Common myeloid progenitor, CD34-positive (primary cell): ENCODE measurements at regions of chr12 and their contacts with region 1.

Region 1: DNA sequence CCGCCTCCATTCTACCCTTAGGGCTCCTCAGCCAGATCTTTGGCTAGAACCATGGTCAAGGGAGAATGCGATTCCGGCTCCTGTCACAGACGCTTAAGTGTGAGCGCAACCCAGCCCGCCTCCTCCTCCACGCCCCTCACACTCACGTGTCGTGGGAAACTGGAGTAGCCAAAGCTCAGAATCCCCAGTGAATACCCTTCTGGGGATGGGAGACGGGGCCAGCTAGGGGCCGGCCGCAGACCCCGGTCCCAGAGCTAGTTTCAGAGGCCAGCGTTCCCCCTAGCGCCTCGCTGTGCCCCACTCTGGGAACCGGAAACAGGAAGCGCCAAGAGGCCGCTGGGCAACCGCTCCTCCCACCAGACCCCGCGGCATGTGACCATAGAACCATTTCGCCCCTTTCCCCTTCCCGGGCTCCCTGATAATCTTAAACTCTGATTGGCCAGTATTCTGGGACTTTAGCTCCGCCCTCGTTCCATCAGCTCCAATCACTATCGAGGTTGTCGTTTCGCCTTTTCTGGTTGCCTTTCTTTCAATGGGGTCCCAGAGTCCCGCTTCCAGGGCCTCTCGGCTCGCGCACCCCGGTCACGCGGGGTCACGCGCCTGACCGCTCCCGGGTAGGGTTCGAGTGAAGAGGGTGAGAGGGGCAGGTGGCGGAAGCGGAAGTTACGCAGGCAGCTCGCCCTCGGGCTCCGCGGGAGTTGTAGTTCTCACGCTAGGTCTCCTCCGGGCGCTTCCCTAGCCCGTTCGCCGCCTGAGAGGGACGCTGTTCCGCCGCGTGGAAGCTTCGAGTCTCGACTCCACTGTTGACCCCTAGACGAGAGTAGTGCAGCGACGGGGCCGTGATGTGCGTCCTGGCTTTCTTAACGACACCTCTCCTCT is at the start of gene M6PR:
- DNase-seq: peak; percentile 95 to 96 (median 96)
- H3K4me3 ChIP-seq: peak within 1 kb of the TSS; percentile 66 to 98 (median 94)
- H3K27ac ChIP-seq: peak within 1 kb of the TSS; percentile 98 to 99
- H3K4me1 ChIP-seq: peaks cover 16 to 40% (median 28%) of the 10 kb centered on the region in 4 experiments
- H3K27me3 ChIP-seq: no peaks in the 10 kb centered on the region

Region 2: DNA sequence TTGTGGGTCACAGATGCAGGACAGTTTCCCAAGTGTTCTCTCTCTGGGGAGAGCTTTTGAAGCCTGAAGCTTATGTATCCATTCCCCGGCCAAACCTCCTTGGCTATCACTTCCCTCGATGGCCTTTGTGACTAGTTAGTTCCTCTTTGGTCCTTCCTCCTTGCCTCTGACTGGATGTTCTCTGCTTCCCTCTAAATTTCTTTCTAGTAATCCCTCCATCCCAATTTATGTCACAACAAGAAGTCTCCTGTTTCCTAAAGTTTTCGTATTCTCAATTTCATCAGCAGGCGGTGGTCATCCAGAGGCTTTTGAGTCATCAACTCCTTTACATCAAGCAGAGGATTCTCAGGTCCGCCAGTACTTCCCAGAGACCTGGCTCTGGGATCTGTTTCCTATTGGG is 99.7 kb before region 1 on chr12:
- CTCF ChIA-PET with region 1: no interaction called
- POLR2A ChIA-PET with region 1: no interaction called
- DNase-seq: peak in 2 of 3 donors; percentile 6 to 21
- H3K4me3 ChIP-seq: no peak overlapping the region
- H3K27ac ChIP-seq: no peak overlapping the region
- H3K4me1 ChIP-seq: peaks cover 0 to 8% (median 2%) of the 10 kb centered on the region in 4 experiments
- H3K27me3 ChIP-seq: no peaks in the 10 kb centered on the region

Region 3: GRCh38 chr12:8876887-8877286 is 72.7 kb before region 1 on chr12:
- CTCF ChIA-PET with region 1: no interaction called
- POLR2A ChIA-PET with region 1: no interaction called
- DNase-seq: no peak
- H3K4me3 ChIP-seq: no peak overlapping the region
- H3K27ac ChIP-seq: no peak overlapping the region
- H3K4me1 ChIP-seq: no peaks in the 10 kb centered on the region
- H3K27me3 ChIP-seq: no peaks in the 10 kb centered on the region

Region 4: DNA sequence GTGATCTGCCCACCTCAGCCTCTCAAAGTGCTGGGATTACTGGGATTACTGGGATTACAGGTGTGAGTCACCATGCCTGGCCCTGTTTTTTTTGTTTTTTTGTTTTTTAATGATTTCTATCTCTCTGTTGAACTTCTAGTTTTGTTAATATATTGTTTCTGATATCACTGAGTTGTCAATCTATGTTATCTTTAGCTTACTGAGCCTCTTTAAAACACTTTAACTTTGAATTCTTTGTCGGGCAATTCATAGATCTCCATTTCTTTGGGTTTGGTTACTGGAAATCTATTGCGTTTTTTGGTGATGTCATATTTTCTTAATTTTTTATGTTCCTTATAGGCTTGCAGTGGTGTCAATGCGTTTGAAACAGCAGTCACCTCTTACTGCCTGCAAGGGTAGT is 30.6 kb after region 1 on chr12:
- CTCF ChIA-PET with region 1: no interaction called
- POLR2A ChIA-PET with region 1: no interaction called
- DNase-seq: no peak
- H3K4me3 ChIP-seq: no peak overlapping the region
- H3K27ac ChIP-seq: no peak overlapping the region
- H3K4me1 ChIP-seq: peaks cover 0 to under 1% (median 0%) of the 10 kb centered on the region in 4 experiments
- H3K27me3 ChIP-seq: no peaks in the 10 kb centered on the region

Region 5: DNA sequence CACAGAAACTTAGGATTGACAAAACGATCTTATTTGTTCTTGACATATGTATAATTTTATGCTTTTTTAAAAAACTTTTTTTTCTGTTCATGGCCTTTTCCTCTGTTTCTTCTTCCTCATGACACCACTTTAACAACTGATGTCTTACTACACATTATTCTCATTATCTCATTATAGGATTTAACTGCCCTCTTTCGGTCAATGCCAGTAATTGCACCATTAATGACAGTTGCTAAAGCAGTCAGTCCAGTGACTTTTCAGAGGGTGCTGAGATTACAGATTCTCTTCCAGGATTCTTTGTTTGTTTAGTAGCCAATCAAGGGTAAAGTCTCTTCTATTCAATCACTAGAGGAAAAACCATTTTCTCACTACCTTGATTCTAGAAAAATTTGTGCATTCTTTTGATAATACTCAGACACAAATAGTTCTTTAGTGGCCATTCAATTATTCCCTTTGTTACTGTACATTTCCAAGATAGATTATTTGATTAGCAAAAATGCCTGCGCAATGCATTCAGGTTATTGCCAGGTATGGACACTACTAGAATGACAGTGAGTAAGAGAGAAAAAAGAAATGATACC is 89.9 kb after region 1 on chr12:
- CTCF ChIA-PET with region 1: interaction called, 151 read pairs
- POLR2A ChIA-PET with region 1: no interaction called
- DNase-seq: peak; percentile 49 to 68 (median 66)
- H3K4me3 ChIP-seq: no peak overlapping the region
- H3K27ac ChIP-seq: no peak overlapping the region
- H3K4me1 ChIP-seq: no peaks in the 10 kb centered on the region
- H3K27me3 ChIP-seq: no peaks in the 10 kb centered on the region